ENCODE measurements at regions of chr5 and their contacts with region 1.

Region 1: GRCh38 chr5:168579488-168580226 is 489 bp upstream of the PANK3 start:
- DNase-seq: peak; percentile 99

Region 2: DNA sequence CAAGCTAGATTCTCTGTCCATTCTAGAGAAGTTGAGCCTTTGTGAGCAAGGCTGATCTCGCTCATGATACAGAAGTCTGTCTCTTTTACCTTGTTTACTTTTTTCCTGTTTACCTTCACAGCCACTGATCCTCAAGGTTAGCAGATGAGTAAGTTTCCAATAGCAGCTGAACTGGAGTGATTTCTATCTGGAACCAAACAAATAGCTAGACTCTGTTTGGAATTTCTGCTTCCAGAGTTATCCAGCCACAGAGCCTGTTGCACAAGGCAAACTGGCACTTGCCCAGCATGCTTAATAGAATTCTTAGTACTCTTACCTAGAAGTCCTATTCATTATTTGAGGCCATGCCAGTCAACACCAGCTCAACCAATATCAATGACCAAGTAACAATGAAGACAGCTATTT is 12.4 kb after region 1 on chr5:
- CTCF ChIA-PET with region 1: no interaction called
- POLR2A ChIA-PET with region 1: interaction called, 28 read pairs
- DNase-seq: no peak

Region 3: DNA sequence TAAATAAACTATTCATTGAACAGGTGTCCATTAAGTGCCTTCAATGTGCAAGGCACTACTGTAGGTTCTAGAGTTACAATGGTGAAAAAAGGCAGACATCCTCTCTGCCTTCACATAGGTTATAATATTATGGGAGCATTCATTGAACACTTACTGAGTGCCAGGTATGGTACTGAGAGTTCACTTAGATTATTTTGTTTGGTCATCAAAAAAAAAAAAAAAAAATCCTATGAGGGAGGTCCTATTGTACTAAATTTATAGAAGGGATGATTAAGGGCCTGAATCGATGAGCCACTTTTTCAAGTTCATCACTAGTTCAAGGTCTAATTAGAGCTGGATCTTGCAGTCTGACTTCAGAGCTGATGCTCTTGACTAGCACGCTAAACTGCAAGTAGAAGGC is 22.3 kb after region 1 on chr5:
- CTCF ChIA-PET with region 1: no interaction called
- POLR2A ChIA-PET with region 1: interaction called, 10 read pairs
- DNase-seq: no peak

Measured in HEK293T (cell line).